Activated CD8-positive, alpha-beta T cell treated with anti-CD3 and anti-CD28 coated beads, Interleukin-2, amount 10 ng/mL, durations not matched to agents 7 days and 5 days (primary cell): ENCODE measurements at regions of chr17 and their contacts with region 1.

Region 1: GRCh38 chr17:16285957-16286640 is 67.2 kb downstream of the CENPV start:
- DNase-seq: peak; percentile 93
- ATAC-seq: peak; percentile 96
- H3K4me3 Mint-ChIP-seq: peak overlapping the region; percentile 72
- H3K27ac Mint-ChIP-seq: peak overlapping the region; percentile 96
- H3K4me1 Mint-ChIP-seq: peaks cover 50% of the 10 kb centered on the region
- H3K27me3 Mint-ChIP-seq: no peaks in the 10 kb centered on the region

Region 2: DNA sequence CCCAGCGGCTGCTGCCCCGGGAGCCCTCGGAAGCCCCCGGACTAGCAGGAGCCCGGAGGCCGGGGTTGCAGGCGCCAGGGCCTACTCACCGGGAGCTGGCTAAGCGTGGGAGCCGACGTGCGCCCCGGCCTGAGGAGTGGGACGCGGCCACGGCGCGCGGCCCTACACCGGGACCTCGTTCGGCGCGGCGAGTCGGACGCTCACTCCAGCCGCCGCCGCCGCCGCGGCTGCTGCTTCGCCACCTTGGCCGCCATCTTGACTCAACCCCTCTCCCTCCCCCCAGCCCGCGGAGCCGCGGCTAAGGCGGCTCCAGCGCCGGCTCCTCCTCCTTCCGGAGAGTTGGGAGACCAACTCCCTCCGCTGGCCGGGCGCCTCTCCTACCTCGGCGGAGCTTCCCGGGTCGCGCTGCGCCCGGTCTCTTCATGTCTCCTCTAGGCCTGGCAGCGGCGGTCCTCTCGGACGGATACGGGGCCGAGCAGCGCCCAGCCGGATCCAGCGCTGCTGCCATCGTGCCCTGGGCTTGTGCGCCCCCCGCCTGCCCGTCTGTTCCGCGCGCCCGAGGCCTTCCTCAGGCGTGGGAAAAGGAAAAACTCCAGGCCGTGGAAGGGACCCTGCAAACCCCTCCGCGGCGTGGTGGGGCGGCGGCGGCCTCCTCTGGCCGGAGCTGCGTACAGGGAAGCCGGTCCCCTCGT is 70.7 kb before region 1 on chr17 and contains the start of gene NCOR1:
- CTCF ChIA-PET with region 1: interaction called, 6 read pairs
- POLR2A ChIA-PET with region 1: interaction called, 12 read pairs
- DNase-seq: peak; percentile 93
- ATAC-seq: peak; percentile 88
- H3K4me3 Mint-ChIP-seq: peak within 1 kb of the TSS; percentile 84
- H3K27ac Mint-ChIP-seq: peak within 1 kb of the TSS; percentile 85
- H3K4me1 Mint-ChIP-seq: peaks cover 48% of the 10 kb centered on the region
- H3K27me3 Mint-ChIP-seq: no peaks in the 10 kb centered on the region
- total RNA-seq, gene NCOR1: 160 to 161 TPM

Region 3: DNA sequence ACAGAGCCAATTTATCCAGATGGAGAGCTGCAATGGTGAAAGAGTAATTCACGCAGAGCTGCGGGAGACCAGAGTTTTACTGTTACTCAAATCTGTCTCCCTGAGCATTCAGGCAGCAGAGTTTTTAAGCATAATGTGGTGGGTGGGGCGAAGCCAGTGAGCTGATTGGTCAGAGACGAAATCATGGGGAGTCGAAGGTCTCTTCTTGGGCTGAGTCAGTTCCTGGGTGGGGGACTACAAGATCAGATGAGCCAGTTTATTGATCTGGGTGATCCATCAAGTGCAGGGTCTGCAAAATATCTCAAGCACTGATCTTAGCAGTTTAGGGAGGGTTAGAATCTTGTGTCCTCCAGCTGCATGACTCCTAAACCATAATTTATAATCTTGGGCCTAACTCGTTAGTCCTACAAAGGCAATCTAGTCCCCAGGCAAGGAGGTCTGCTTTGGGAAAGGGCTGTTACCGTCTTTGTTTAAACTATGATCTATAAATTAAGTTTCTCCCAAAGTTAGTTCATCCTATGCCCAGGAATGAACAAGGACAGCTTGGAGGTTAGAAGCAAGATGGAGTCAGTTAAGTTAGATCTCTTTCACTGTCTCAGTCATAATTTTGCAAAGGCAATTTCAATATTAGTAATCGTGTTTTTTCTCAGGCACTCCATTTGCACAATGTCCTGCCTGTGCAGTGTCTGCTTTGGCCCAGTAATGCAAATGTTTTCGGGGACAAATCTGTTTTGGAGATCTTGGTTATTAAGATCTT is 42.1 kb before region 1 on chr17:
- CTCF ChIA-PET with region 1: no interaction called
- POLR2A ChIA-PET with region 1: no interaction called
- DNase-seq: no peak
- ATAC-seq: no peak
- H3K4me3 Mint-ChIP-seq: no peak overlapping the region
- H3K27ac Mint-ChIP-seq: no peak overlapping the region
- H3K4me1 Mint-ChIP-seq: no peaks in the 10 kb centered on the region
- H3K27me3 Mint-ChIP-seq: no peaks in the 10 kb centered on the region

Region 4: GRCh38 chr17:16297367-16298139 is 11.5 kb after region 1 on chr17:
- CTCF ChIA-PET with region 1: interaction called, 6 read pairs
- POLR2A ChIA-PET with region 1: interaction called, 11 read pairs
- DNase-seq: no peak
- ATAC-seq: no peak
- H3K4me3 Mint-ChIP-seq: no peak overlapping the region
- H3K27ac Mint-ChIP-seq: no peak overlapping the region
- H3K4me1 Mint-ChIP-seq: peaks cover 18% of the 10 kb centered on the region
- H3K27me3 Mint-ChIP-seq: no peaks in the 10 kb centered on the region

Region 5: DNA sequence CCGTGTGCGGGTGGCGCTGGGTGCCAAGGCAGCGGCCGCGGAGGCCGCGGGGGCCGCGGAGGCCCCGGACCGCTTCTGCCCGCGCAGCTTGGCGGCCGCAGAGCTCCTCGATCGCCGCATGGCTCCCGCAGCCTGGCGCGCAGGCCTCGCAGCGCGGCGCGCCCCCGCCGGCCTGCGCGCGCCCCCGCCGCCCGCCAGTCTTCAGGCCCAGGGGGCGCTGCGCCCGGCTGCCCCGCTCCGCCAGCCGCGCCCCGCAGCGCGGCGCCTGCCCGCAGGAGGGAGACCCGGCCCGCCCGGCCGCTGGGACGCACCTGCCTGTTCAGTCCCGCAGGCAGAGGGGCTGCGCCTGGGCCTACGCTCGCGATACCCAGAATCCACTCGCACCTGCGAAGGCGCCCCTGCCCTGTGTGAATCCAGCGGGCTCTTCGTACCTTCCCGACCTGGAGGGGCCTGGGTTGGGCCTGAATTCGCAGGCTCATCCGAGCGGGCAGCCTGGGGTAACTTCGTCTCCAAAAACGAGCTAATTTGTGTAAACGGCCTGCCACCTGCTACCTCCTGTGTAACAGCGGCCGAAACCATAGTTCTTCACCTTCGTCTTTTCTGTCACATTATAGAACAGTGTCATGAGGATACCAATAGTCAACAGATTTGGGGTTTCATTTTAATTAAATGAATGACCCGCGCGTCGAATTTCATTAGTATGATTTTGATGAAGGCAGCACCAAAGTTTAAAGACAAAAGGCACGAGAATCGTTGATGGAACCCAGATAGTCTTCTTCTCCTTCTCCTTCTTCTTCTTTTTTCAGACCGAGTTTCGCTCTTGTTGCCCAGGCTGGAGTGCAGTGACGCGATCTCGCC is 67.4 kb after region 1 on chr17 and contains the start of gene CENPV:
- CTCF ChIA-PET with region 1: interaction called, 21 read pairs
- POLR2A ChIA-PET with region 1: interaction called, 6 read pairs
- DNase-seq: peak; percentile 67
- ATAC-seq: peak; percentile 87
- H3K4me3 Mint-ChIP-seq: peak within 1 kb of the TSS; percentile 83
- H3K27ac Mint-ChIP-seq: peak within 1 kb of the TSS; percentile 79
- H3K4me1 Mint-ChIP-seq: peaks cover 25% of the 10 kb centered on the region
- H3K27me3 Mint-ChIP-seq: peaks cover 9% of the 10 kb centered on the region
- total RNA-seq, gene CENPV: 28.6 to 36.4 TPM

Region 6: DNA sequence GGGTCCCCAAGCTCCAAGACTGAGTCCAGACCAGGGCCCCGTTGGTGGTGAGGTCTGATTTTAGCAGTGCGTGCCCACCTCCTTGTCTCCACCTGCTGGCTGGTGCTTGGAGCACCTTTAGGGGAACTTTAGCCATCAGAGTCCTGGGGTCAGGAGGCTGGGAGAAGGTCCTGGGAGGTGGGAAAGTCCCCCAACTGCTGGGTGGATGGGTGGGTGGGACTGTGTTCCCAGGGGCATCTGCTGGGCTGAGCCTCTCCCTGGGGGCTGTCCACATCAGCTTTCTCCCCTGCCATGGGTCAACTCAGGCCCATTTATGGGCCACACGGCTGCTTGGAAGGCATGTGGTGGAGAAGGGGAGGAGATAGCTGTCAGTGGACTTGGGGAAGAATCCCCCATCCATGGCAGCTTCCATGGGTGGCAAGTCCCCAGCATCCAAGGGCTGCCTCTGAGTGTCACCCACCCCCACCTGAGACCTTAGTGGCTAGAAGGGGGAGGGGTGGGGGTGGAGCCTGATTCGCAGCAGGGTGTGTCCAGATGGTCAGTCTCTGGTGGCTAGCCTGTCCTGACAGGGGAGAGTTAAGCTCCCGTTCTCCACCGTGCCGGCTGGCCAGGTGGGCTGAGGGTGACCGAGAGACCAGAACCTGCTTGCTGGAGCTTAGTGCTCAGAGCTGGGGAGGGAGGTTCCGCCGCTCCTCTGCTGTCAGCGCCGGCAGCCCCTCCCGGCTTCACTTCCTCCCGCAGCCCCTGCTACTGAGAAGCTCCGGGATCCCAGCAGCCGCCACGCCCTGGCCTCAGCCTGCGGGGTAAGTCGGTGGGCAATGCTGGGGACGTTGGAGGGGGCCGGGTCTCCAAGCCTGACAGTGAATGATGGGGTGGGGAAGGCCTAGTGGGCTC is 129.2 kb after region 1 on chr17 and contains the start of gene TRPV2:
- CTCF ChIA-PET with region 1: interaction called, 14 read pairs
- POLR2A ChIA-PET with region 1: interaction called, 4 read pairs
- DNase-seq: peak; percentile 78
- ATAC-seq: peak; percentile 55
- H3K4me3 Mint-ChIP-seq: peak within 1 kb of the TSS; percentile 99
- H3K27ac Mint-ChIP-seq: peak within 1 kb of the TSS; percentile 100
- H3K4me1 Mint-ChIP-seq: peaks cover 46% of the 10 kb centered on the region
- H3K27me3 Mint-ChIP-seq: no peaks in the 10 kb centered on the region
- total RNA-seq, gene TRPV2: 124 to 134 TPM